A673 (cell line): ENCODE measurements at regions of chr20 and their contacts with region 1.

Region 1: DNA sequence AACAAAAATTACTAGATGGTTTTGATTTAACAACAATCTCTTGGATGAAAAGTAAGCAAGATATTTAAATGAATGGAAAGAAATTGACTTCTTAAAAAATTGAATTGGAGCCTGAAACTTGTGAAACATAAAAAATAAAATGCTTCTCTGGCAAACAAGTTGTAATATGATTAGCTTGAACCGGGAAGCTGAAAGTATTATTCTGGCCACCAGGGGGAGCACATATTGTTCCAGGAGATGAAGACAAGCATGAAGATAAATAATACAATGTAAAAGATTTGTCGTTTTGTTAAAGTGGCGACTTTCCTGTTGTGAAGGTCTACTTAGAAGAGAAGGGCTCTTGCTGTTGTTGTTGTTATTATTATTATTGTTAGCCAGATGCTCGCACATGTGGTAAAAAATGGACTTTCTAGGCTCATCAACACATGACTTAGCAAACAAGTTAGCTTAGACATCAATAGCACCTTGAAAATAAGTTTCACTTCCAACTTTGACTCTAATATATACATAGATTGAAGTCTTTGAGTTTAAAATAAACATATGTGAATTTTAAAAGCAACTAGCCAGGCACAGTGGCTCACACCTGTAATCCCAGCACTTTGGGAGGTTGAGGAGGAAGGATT is 14.2 kb downstream of the PAX1 start:
- DNase-seq: peak; percentile 72
- H3K4me3 ChIP-seq: no peak overlapping the region
- H3K27ac ChIP-seq: no peak overlapping the region
- H3K4me1 ChIP-seq: no peaks in the 10 kb centered on the region
- H3K27me3 ChIP-seq: peaks cover 66% of the 10 kb centered on the region
- CTCF ChIP-seq: peak; percentile 90

Region 2: DNA sequence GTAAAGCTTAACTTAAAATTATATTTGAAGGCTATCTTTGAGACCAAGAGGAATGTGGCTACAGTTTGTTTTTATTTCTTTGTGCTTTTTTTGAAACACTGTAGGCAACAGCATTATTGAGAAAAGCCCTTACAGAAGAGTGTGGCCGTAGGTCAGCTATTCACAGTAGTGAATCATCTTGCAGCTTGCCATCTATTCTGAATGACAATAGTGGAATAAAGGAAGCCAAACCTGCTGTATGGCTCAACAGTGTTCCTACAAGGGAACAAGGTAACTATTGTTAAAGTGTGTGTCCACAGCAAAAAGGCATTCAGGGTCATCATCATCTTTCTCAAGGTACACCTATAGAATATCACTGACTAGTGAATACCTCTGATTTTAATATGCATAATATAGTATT is 505.3 kb before region 1 on chr20:
- CTCF ChIA-PET with region 1: no interaction called
- POLR2A ChIA-PET with region 1: no interaction called
- intact Hi-C with region 1: no loop called
- DNase-seq: no peak
- H3K4me3 ChIP-seq: no peak overlapping the region
- H3K27ac ChIP-seq: no peak overlapping the region
- H3K4me1 ChIP-seq: no peaks in the 10 kb centered on the region
- H3K27me3 ChIP-seq: no peaks in the 10 kb centered on the region
- CTCF ChIP-seq: no peak

Region 3: DNA sequence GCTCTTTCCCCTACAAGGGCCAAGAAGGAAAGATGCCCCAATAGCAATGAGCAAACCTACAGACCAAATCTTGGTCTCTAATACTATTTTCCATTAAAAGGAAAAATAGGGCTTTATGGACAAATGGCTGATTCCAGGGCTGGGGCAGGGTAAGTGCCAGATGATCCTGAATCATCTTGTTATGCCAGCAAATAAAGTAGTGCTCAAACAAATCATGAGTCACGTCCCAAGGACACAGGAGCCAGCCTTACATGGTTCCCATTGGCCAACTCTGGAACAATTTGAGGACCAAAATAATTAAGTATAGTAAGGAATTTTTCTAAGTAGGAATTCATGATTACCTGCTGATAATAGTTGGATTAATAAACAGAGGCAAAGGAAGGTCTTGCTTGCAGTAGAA is 269.1 kb before region 1 on chr20:
- CTCF ChIA-PET with region 1: no interaction called
- POLR2A ChIA-PET with region 1: no interaction called
- intact Hi-C with region 1: no loop called
- DNase-seq: no peak
- H3K4me3 ChIP-seq: no peak overlapping the region
- H3K27ac ChIP-seq: no peak overlapping the region
- H3K4me1 ChIP-seq: no peaks in the 10 kb centered on the region
- H3K27me3 ChIP-seq: no peaks in the 10 kb centered on the region
- CTCF ChIP-seq: no peak

Region 4: DNA sequence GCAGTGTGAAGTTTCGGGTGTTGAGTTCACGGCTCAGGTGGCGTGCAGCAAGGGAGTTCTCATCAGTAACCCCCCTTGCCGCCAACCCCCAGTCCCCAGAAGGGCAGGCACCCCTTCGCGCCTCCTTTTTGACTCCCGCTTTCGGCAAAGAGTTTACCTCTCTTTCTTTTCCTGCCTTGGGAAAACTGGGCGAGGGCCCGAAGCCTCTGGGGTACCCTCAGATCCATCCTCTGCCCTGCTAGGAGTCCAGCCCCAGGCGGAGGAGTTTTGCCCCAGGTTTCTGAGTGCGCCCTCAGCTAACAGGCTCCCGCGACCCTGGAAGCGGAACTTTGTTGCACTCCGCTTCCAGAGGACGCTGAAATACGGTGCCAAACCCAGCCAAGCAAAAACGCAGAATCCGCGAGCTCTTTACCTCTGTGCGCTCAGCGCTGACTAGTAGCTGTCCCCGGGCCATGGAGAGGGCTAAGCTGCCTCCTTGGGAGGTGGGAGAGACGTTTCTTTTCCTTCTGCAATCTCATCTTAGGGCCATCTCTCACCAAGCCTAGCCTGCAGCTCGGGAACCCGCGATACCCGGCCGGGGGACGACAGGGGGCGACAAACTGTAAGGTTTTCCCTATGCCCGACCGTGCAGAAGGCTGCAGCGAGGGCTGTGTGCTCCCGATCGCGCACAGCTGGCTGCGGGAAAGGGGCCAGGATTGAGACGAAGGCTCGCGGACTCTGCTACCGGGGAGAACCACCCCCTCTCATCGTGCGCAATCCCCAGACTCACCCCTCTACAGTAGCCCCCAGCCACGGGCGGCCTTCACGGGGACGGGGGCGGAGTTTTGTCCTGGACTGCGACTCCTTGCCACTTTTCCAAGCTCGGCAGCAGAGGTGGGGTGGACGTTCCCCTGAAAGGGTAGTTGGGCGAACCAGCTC is 16.9 kb before region 1 on chr20:
- CTCF ChIA-PET with region 1: interaction called, 10 read pairs
- POLR2A ChIA-PET with region 1: no interaction called
- intact Hi-C with region 1: no loop called
- DNase-seq: peak; percentile 88
- H3K4me3 ChIP-seq: peak overlapping the region; percentile 36
- H3K27ac ChIP-seq: no peak overlapping the region
- H3K4me1 ChIP-seq: peaks cover 3% of the 10 kb centered on the region
- H3K27me3 ChIP-seq: peaks cover 88% of the 10 kb centered on the region
- CTCF ChIP-seq: peak; percentile 90

Region 5: GRCh38 chr20:21767739-21768223 is 48.1 kb after region 1 on chr20:
- CTCF ChIA-PET with region 1: no interaction called
- POLR2A ChIA-PET with region 1: no interaction called
- intact Hi-C with region 1: loop called (anchors 10 kb)
- DNase-seq: peak; percentile 48
- H3K4me3 ChIP-seq: no peak overlapping the region
- H3K27ac ChIP-seq: no peak overlapping the region
- H3K4me1 ChIP-seq: no peaks in the 10 kb centered on the region
- H3K27me3 ChIP-seq: peaks cover 11% of the 10 kb centered on the region
- CTCF ChIP-seq: peak; percentile 90

Region 6: DNA sequence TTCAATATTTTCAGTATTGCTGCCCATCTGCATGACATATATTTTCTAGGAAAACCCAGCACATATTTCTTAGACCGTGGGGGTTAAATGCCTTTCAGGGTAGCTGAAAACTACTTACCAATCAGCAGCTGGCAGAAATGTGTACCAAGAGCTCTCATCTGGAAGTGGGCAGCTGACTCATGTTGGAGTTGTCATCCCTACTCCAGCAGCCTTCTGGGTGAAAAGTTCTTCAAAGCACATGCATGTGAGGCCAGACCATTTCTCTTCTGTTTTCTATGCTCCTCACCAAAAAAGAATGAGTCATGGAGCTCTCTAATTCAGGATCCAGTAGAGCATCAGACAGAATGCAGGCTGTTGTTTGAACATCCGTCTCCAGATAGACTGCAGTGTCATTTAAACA is 121.3 kb after region 1 on chr20:
- CTCF ChIA-PET with region 1: no interaction called
- POLR2A ChIA-PET with region 1: no interaction called
- intact Hi-C with region 1: no loop called
- DNase-seq: no peak
- H3K4me3 ChIP-seq: no peak overlapping the region
- H3K27ac ChIP-seq: no peak overlapping the region
- H3K4me1 ChIP-seq: no peaks in the 10 kb centered on the region
- H3K27me3 ChIP-seq: peaks cover 29% of the 10 kb centered on the region
- CTCF ChIP-seq: no peak

Region 7: GRCh38 chr20:22106308-22106938 is 386.7 kb after region 1 on chr20:
- CTCF ChIA-PET with region 1: interaction called, 5 read pairs
- POLR2A ChIA-PET with region 1: no interaction called
- intact Hi-C with region 1: loop called (anchors 5 kb)
- DNase-seq: peak; percentile 37
- H3K4me3 ChIP-seq: no peak overlapping the region
- H3K27ac ChIP-seq: no peak overlapping the region
- H3K4me1 ChIP-seq: no peaks in the 10 kb centered on the region
- H3K27me3 ChIP-seq: no peaks in the 10 kb centered on the region
- CTCF ChIP-seq: peak; percentile 60

Region 8: GRCh38 chr20:22248051-22248667 is 528.5 kb after region 1 on chr20:
- CTCF ChIA-PET with region 1: no interaction called
- POLR2A ChIA-PET with region 1: no interaction called
- intact Hi-C with region 1: loop called (anchors 5 kb)
- DNase-seq: peak; percentile 29
- H3K4me3 ChIP-seq: no peak overlapping the region
- H3K27ac ChIP-seq: no peak overlapping the region
- H3K4me1 ChIP-seq: no peaks in the 10 kb centered on the region
- H3K27me3 ChIP-seq: peaks cover 4% of the 10 kb centered on the region
- CTCF ChIP-seq: peak; percentile 69

Region 9: GRCh38 chr20:22312744-22313346 is 593.1 kb after region 1 on chr20:
- CTCF ChIA-PET with region 1: interaction called, 13 read pairs
- POLR2A ChIA-PET with region 1: no interaction called
- intact Hi-C with region 1: loop called (anchors 2 kb)
- DNase-seq: peak; percentile 44
- H3K4me3 ChIP-seq: no peak overlapping the region
- H3K27ac ChIP-seq: no peak overlapping the region
- H3K4me1 ChIP-seq: no peaks in the 10 kb centered on the region
- H3K27me3 ChIP-seq: peaks cover 3% of the 10 kb centered on the region
- CTCF ChIP-seq: peak; percentile 78